Activated CD4-positive, alpha-beta T cell treated with anti-CD3 and anti-CD28 coated beads, Interleukin-2, amount 10 ng/mL, durations not matched to agents 24 days and 14 days (primary cell): ENCODE measurements at regions of chr12 and their contacts with region 1.

Region 1: GRCh38 chr12:101490286-101490920 is 15.3 kb downstream of the SPIC start:
- DNase-seq: no peak
- H3K4me3 Mint-ChIP-seq: no peak overlapping the region
- H3K27ac Mint-ChIP-seq: no peak overlapping the region
- H3K4me1 Mint-ChIP-seq: no peaks in the 10 kb centered on the region
- H3K27me3 Mint-ChIP-seq: peaks cover 3% of the 10 kb centered on the region

Region 2: DNA sequence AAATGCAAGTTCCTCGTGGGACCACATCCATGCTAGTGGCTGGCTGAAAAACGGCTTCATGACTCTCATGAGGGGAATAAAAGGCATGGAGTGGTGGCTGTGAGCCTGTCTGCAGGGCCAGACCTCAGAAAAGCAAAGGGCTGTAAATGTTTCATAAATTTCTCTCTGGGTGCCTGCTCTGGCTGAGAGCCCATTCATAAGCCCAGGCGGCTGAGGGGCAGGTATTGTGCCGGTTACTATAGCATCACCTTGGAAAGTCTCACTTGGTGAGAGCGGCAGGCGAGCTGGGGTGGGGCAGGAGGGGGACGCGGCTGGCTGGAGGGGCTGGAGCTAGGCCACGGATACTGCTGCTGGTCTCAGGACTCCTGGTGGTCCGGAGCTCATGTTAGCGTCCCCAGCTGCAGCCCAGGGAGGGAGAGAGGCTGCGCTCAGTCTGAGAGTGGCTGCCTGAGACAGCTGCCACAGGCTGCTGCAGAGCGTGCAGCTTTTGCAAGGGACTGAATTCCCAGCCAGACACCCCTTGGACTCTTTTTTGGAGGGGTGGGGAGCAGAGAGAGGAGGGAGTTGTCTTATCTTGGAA is 1133.7 kb before region 1 on chr12 and contains the start of gene SLC17A8:
- intact Hi-C with region 1: loop called (anchors 10 kb)
- DNase-seq: no peak
- H3K4me3 Mint-ChIP-seq: no peak within 1 kb of the TSS
- H3K27ac Mint-ChIP-seq: no peak within 1 kb of the TSS
- H3K4me1 Mint-ChIP-seq: no peaks in the 10 kb centered on the region
- H3K27me3 Mint-ChIP-seq: peaks cover 40% of the 10 kb centered on the region
- total RNA-seq, gene SLC17A8: not detected in 2 replicates